ENCODE measurements at regions of chr10 and their contacts with region 1.

Region 1: DNA sequence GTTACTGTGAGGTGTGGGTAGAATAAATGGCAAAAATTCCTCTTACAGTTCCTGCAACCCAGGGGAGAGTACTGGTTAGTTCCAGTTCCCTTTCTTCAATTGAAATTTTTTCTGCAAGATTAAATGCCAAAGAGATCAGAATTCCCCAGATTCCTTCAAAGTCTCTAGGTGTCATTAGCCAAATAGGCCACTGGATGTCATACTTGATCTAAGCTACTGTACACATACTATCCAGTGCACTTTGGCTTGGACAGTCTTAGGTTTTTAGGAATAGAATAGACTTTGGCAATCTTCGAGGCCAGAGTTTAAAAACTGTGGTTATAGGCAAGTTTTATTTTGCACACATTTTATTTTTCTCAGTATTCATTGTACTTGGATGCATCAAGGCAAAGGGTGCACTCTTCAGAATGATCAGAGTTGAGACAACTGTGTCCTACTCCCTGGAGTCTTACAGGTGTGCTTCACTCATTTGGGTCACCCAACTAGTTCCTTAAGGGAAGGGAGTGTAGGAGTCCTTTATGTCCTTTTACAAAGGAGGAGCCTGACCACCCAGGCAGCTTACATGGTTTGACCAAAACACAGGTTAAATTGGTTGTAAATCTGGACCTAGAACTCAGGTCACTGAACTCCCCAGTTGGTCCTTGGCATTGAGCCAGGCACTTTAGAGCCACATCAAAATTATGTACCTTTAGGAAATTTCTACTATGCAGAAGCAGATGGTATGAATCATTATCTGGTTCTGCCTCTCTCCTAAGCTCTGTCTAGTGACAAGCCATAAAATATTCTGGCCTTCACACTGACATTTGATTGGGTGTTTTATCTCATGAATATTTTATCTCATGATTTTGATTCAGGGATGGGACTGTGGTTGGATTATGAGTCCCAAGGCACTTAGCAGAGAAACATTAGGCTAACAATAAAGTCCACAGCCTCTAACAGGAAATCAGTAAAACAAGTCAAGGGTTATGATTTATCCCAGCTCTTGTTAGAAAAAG is 49.5 kb downstream of the ASAH2B start:
- DNase-seq: peak; percentile 89
- ATAC-seq: peak; percentile 100
- H3K4me3 ChIP-seq: no peak overlapping the region
- H3K27ac ChIP-seq: no peak overlapping the region
- H3K4me1 ChIP-seq: peaks cover 5% of the 10 kb centered on the region; the same call in 1 of the 2 replicates
- H3K27me3 ChIP-seq: peaks cover 11% of the 10 kb centered on the region; the same call in 1 of the 2 replicates
- CTCF ChIP-seq: peak; percentile 98

Region 2: DNA sequence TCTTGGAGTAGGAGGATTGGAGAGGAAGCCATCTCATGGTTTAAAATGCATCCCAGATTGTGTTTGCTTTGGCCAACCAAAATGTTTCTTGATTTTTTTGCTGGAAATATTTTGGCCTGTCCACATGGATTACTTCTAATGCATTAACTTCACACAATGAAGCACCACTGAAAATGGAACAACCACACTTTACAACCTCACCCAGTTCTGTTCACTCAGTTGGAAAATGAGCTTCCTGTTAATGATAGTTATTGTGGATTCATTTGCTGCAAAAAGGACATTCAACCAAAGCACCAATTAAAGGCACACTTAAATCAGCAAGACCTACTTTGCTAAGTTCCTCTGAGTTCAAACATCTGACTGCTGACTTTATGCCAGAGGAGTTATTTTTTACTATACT is 107.5 kb after region 1 on chr10:
- CTCF ChIA-PET with region 1: no interaction called
- POLR2A ChIA-PET with region 1: no interaction called
- intact Hi-C with region 1: loop called (anchors 1 kb)
- DNase-seq: no peak
- ATAC-seq: no peak
- H3K4me3 ChIP-seq: no peak overlapping the region
- H3K27ac ChIP-seq: no peak overlapping the region
- H3K4me1 ChIP-seq: no peaks in the 10 kb centered on the region
- H3K27me3 ChIP-seq: peaks cover 81% of the 10 kb centered on the region
- CTCF ChIP-seq: no peak

Region 3: GRCh38 chr10:50937230-50937907 is 148.1 kb after region 1 on chr10:
- CTCF ChIA-PET with region 1: no interaction called
- POLR2A ChIA-PET with region 1: no interaction called
- intact Hi-C with region 1: loop called (anchors 1 kb)
- DNase-seq: peak; percentile 90
- ATAC-seq: peak; percentile 82
- H3K4me3 ChIP-seq: no peak overlapping the region
- H3K27ac ChIP-seq: no peak overlapping the region
- H3K4me1 ChIP-seq: no peaks in the 10 kb centered on the region
- H3K27me3 ChIP-seq: peaks cover 55% of the 10 kb centered on the region
- CTCF ChIP-seq: peak; percentile 98

Region 4: GRCh38 chr10:50988792-50989191 is 199.5 kb after region 1 on chr10:
- CTCF ChIA-PET with region 1: no interaction called
- POLR2A ChIA-PET with region 1: interaction called, 4 read pairs
- intact Hi-C with region 1: loop called (anchors 2 kb)
- DNase-seq: peak; percentile 78
- ATAC-seq: no peak
- H3K4me3 ChIP-seq: no peak overlapping the region
- H3K27ac ChIP-seq: no peak overlapping the region
- H3K4me1 ChIP-seq: peaks cover 16% of the 10 kb centered on the region
- H3K27me3 ChIP-seq: peaks cover 61% of the 10 kb centered on the region
- CTCF ChIP-seq: peak; percentile 97

Measured in PC-3 (cell line).